Aorta (tissue), 5 donors: ENCODE measurements at regions of chr15 and their contacts with region 1.

Region 1: GRCh38 chr15:63593705-63594671 is 3.2 kb upstream of the FBXL22 start:
- DNase-seq: no peak
- ATAC-seq: no peak
- H3K4me3 ChIP-seq: no peak overlapping the region
- H3K27ac ChIP-seq: no peak overlapping the region
- H3K4me1 ChIP-seq: peaks cover 3 to 6% of the 10 kb centered on the region in 2 donors
- H3K27me3 ChIP-seq: no peaks in the 10 kb centered on the region

Region 2: DNA sequence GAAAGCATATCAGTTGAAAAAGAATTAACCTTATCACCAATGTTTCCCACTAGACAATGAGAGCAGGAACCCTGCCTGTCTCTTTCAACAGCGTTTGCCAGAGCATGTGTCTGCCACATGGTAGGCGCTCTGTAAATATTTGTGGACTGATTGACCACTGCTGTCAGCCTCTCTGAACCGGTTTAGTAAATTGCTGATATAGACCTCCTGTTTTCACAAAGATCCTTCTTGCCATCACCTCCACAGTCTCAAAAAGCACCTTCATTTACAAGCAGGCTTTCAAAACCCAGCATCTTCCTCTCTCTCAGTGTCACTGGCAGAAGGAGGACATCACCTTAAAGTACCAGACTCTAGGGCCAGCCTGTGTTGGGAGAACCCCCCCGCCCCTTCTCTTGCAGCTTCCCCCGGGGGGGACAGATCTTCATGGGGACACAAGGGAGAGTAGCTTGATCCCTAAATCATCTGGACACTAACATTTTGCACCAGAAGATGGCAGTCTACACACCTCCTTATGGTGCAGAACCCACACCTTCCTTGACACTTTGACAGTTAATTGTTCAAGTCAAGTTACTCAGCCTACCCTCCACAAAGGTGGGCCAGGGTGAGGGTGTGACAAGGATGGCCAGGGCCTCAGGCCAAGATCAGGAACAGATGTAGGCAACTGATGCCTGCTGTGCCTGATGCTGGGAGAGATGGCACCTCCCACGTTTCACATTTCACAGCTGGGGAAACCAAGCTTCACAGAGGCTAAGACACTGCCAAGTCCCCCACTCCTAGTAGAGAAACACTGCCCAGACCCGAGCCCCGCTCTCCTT is 127.4 kb before region 1 on chr15:
- intact Hi-C with region 1: loop called (anchors 5 kb)
- DNase-seq: no peak
- ATAC-seq: peak; percentile 78
- H3K4me3 ChIP-seq: no peak overlapping the region
- H3K27ac ChIP-seq: no peak overlapping the region
- H3K4me1 ChIP-seq: no peaks in the 10 kb centered on the region
- H3K27me3 ChIP-seq: no peaks in the 10 kb centered on the region

Region 3: DNA sequence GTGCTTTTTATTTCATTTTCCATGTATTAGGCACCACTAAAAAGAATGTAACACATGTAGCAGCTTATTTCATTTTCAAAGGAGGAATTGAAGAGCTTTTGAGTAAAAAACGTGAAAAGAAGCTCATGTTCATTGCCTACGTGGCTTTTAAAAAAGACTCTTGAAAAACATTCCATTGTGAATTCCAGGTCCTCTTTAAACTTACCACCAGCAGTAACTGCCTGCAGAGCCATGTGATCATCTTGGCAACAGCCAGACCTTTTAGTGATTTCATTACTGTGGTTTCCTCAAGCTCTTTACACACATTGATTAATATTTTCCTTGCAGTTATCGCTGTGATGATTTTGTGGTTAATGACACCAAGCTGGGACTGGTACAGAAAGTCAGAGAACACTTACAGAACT is 40.6 kb before region 1 on chr15:
- intact Hi-C with region 1: loop called in 1 of 2 experiments (anchors 5 kb)
- DNase-seq: no peak
- ATAC-seq: peak; percentile 84
- H3K4me3 ChIP-seq: peak overlapping the region in 1 of 2 donors; percentile 34
- H3K27ac ChIP-seq: no peak overlapping the region
- H3K4me1 ChIP-seq: peaks cover 2 to 3% of the 10 kb centered on the region in 2 donors
- H3K27me3 ChIP-seq: no peaks in the 10 kb centered on the region

Region 4: GRCh38 chr15:63800739-63801138 is 206.8 kb after region 1 on chr15:
- intact Hi-C with region 1: no loop called
- DNase-seq: no peak
- ATAC-seq: no peak
- H3K4me3 ChIP-seq: no peak overlapping the region
- H3K27ac ChIP-seq: no peak overlapping the region
- H3K4me1 ChIP-seq: no peaks in the 10 kb centered on the region
- H3K27me3 ChIP-seq: no peaks in the 10 kb centered on the region